Activated CD4-positive, alpha-beta memory T cell treated with anti-CD3 and anti-CD28 coated beads for 36 hours (primary cell): ENCODE measurements at regions of chr19 and their contacts with region 1.

Region 1: GRCh38 chr19:7004313-7004931 is 16.8 kb downstream of the MBD3L2B start:
- DNase-seq: no peak
- H3K4me3 Mint-ChIP-seq: no peak overlapping the region
- H3K27ac Mint-ChIP-seq: no peak overlapping the region
- H3K4me1 Mint-ChIP-seq: peaks cover 27% of the 10 kb centered on the region
- H3K27me3 Mint-ChIP-seq: no peaks in the 10 kb centered on the region

Region 2: GRCh38 chr19:6674868-6675305 is 329.5 kb before region 1 on chr19:
- CTCF ChIA-PET with region 1: no interaction called
- POLR2A ChIA-PET with region 1: no interaction called
- intact Hi-C with region 1: no loop called
- DNase-seq: peak; percentile 98
- H3K4me3 Mint-ChIP-seq: peak overlapping the region; percentile 62
- H3K27ac Mint-ChIP-seq: peak overlapping the region; percentile 79
- H3K4me1 Mint-ChIP-seq: peaks cover 69% of the 10 kb centered on the region
- H3K27me3 Mint-ChIP-seq: peaks cover 3% of the 10 kb centered on the region

Region 3: GRCh38 chr19:6947745-6948144 is 56.7 kb before region 1 on chr19:
- CTCF ChIA-PET with region 1: interaction called, 3 read pairs
- POLR2A ChIA-PET with region 1: no interaction called
- intact Hi-C with region 1: loop called (anchors 10 kb)
- DNase-seq: peak; percentile 85
- H3K4me3 Mint-ChIP-seq: no peak overlapping the region
- H3K27ac Mint-ChIP-seq: peak overlapping the region; percentile 33
- H3K4me1 Mint-ChIP-seq: peaks cover 17% of the 10 kb centered on the region
- H3K27me3 Mint-ChIP-seq: no peaks in the 10 kb centered on the region